Adrenal gland (tissue), 19 donors: ENCODE measurements at regions of chr22 and their contacts with region 1.

Region 1: GRCh38 chr22:20430720-20431510 is 6.7 kb downstream of the SCARF2 start:
- DNase-seq: peak in 4 of 7 donors; percentile 34 to 61 (median 49)
- H3K4me3 ChIP-seq: peak overlapping the region in 1 of 4 donors; percentile 47
- H3K27ac ChIP-seq: no peak overlapping the region
- H3K4me1 ChIP-seq: peaks cover 12 to 24% of the 10 kb centered on the region in 2 donors
- H3K27me3 ChIP-seq: peaks cover 47% of the 10 kb centered on the region
- CTCF ChIP-seq: peak in 4 of 6 experiments; percentile 24 to 40 (median 26)
- POLR2A ChIP-seq: no peak

Region 2: GRCh38 chr22:20479612-20480196 is 48.8 kb after region 1 on chr22:
- intact Hi-C with region 1: loop called in 1 of 2 experiments (anchors 10 kb)
- DNase-seq: no peak
- H3K4me3 ChIP-seq: no peak overlapping the region
- H3K27ac ChIP-seq: no peak overlapping the region
- H3K4me1 ChIP-seq: no peaks in the 10 kb centered on the region
- H3K27me3 ChIP-seq: no peaks in the 10 kb centered on the region
- CTCF ChIP-seq: no peak
- POLR2A ChIP-seq: no peak

Region 3: DNA sequence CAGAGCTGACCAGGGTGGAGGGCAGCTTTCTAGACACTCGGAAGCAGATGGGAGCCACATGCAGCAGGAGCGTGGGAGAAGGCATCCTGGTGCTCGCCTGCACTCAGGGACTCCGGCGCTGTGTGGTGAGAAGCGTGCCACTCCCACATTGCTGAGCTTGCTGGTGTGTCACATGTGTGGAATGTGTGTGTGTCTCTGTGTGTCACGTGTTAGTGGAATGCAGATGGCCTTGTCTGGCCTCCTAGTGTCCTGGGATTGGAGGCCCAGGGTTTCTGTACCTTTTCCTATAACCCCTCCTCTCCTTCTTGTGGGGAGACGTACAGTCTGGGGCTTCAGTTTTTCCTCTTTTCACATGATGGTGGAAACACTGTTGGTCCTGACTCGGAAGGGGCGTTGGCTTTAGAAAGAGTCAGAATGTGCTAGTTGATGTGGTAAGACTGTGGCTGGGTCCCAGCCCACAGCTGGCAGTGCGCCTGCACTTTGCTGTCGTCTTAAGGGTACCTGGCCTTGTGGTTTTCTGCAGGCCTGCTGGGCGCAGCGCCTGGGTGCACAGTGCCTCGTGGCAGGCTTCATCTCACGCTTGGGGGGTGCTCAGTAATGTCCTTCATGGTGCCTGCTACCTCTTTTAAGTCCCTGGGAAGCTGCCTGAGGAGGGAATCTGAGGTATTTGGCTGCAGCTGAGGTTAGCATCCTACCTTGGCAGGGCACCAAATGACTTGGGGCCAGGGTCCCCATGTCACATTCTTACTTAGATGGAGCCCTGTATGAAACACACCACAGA is 138.3 kb after region 1 on chr22:
- intact Hi-C with region 1: loop called in 1 of 2 experiments (anchors 10 kb)
- DNase-seq: peak; percentile 65 to 93 (median 89)
- H3K4me3 ChIP-seq: no peak overlapping the region
- H3K27ac ChIP-seq: peak overlapping the region in 4 of 5 donors; percentile 48 to 89 (median 76)
- H3K4me1 ChIP-seq: peaks cover 28 to 48% of the 10 kb centered on the region in 2 donors
- H3K27me3 ChIP-seq: no peaks in the 10 kb centered on the region
- CTCF ChIP-seq: peak in 1 of 6 experiments; percentile 5
- POLR2A ChIP-seq: peak in 1 of 2 donors; percentile 68

Region 4: GRCh38 chr22:20583471-20583922 is 152.6 kb after region 1 on chr22:
- intact Hi-C with region 1: no loop called
- DNase-seq: peak in 5 of 7 donors; percentile 35 to 74 (median 68)
- H3K4me3 ChIP-seq: no peak overlapping the region
- H3K27ac ChIP-seq: no peak overlapping the region
- H3K4me1 ChIP-seq: peaks cover 0 to 14% of the 10 kb centered on the region in 2 donors
- H3K27me3 ChIP-seq: no peaks in the 10 kb centered on the region
- CTCF ChIP-seq: no peak
- POLR2A ChIP-seq: no peak